BJ (cell line): ENCODE measurements at regions of chr16 and their contacts with region 1.

Region 1: DNA sequence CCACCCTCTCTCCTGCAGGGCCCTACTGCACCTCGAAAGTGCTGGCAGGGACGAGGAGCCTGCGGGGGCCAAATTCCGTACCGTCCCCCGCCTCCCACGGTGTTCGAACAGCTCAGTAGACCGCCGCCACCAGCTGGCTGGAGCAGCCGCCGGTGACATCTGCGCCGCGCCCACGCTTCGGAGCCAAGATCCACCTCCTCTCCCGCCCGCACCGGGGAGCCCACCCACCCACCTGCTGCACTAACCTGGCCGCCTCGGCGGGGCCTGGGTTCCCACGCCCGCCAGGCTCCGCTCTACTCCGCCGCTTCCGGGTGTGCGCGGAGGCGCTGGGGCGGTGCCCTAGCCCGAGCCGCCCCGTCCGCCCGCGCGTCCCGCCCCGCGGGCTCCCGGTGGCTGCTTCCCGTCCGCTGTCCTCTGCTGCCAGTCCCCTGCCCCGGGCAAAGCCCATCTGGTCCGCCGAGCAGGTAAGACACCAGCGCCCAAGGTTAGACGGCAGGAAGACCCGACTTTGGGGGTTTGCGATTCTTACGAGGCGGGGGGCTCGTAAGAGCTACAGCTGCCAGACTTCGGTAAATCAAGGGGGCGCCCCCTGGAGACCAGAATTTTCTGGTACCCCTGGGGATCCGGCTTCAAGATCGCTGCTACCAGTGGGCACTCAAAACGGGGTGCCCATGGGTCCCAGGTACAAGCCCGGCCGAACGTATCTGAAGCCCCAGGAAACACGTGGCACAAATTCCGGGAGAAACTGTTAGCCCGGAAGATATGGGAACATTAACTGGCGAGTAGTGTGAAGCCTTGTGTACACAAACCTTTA is at the starts of genes FBXL8 and TRADD:
- DNase-seq: no peak
- H3K4me3 ChIP-seq: peak within 1 kb of the TSS; percentile 96
- H3K27me3 ChIP-seq: peaks cover 4% of the 10 kb centered on the region
- CTCF ChIP-seq: peak; percentile 70
- polyA plus RNA-seq, gene FBXL8: 4.1 and 5.7 TPM in 2 replicates
- polyA plus RNA-seq, gene TRADD: 11.1 and 18.6 TPM in 2 replicates

Region 2: GRCh38 chr16:66961065-66961744 is 198.6 kb before region 1 on chr16 and contains the start of gene CES3:
- CTCF ChIA-PET with region 1: interaction called, 26 read pairs
- POLR2A ChIA-PET with region 1: no interaction called
- DNase-seq: no peak
- H3K4me3 ChIP-seq: no peak within 1 kb of the TSS
- H3K27me3 ChIP-seq: peaks cover 17% of the 10 kb centered on the region
- CTCF ChIP-seq: peak; percentile 86
- polyA plus RNA-seq, gene CES3: 0.07 and 0.13 TPM in 2 replicates

Region 3: GRCh38 chr16:66977341-66978113 is 182.3 kb before region 1 on chr16:
- CTCF ChIA-PET with region 1: interaction called, 55 read pairs
- POLR2A ChIA-PET with region 1: no interaction called
- DNase-seq: no peak
- H3K4me3 ChIP-seq: no peak overlapping the region
- H3K27me3 ChIP-seq: no peaks in the 10 kb centered on the region
- CTCF ChIP-seq: peak; percentile 92

Region 4: DNA sequence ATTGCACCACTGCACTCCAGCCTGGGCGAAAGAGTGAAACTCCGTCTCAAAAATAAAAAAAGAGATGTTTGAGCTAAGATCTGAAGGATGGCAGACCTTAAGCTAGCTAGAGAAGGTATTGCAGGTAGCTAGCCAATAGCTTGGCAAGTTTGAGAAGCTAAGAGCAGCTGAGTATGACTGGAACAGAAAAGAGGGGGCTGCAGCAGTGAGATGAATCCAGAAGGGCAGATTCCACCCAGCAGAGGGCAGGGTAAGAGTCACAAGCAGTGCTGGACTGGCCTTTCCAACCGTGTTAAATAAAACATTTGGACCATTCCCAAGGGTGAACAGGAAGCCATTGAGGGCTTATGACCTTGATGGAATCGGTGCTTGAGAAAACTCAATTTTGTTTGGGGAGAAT is 55.7 kb before region 1 on chr16:
- CTCF ChIA-PET with region 1: interaction called, 18 read pairs
- POLR2A ChIA-PET with region 1: no interaction called
- DNase-seq: no peak
- H3K4me3 ChIP-seq: no peak overlapping the region
- H3K27me3 ChIP-seq: no peaks in the 10 kb centered on the region
- CTCF ChIP-seq: peak; percentile 45

Region 5: DNA sequence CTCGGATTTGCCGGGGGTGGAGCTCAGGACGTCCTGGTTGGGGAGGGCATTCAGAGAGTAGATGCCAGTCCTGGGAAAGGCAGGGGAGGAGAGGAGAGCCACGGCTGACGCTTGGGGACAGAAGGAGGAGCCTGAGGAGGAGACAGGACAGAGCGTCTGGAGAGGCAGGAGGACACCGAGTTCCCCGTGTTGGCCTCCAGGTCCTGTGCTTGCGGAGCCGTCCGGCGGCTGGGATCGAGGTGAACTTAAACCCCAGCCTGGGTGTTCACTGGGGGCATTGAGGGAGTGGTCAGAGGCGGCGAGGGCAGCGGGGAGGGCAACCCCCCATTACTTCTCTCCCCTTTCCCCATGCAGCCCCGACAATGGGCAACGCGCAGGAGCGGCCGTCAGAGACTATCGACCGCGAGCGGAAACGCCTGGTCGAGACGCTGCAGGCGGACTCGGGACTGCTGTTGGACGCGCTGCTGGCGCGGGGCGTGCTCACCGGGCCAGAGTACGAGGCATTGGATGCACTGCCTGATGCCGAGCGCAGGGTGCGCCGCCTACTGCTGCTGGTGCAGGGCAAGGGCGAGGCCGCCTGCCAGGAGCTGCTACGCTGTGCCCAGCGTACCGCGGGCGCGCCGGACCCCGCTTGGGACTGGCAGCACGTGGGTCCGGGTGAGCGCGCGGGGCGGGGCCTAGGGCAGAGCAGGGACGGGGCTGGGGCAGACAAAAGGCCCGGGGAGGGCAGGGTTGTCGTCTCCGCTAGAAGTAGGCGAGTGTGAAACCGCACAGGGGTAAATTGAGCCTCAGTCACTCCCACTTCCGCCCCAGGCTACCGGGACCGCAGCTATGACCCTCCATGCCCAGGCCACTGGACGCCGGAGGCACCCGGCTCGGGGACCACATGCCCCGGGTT is 14.3 kb after region 1 on chr16:
- CTCF ChIA-PET with region 1: interaction called, 36 read pairs
- POLR2A ChIA-PET with region 1: interaction called, 3 read pairs
- DNase-seq: no peak
- H3K4me3 ChIP-seq: peak overlapping the region; percentile 48
- H3K27me3 ChIP-seq: no peaks in the 10 kb centered on the region
- CTCF ChIP-seq: peak; percentile 46